ENCODE measurements at regions of chr6 and their contacts with region 1.

Region 1: DNA sequence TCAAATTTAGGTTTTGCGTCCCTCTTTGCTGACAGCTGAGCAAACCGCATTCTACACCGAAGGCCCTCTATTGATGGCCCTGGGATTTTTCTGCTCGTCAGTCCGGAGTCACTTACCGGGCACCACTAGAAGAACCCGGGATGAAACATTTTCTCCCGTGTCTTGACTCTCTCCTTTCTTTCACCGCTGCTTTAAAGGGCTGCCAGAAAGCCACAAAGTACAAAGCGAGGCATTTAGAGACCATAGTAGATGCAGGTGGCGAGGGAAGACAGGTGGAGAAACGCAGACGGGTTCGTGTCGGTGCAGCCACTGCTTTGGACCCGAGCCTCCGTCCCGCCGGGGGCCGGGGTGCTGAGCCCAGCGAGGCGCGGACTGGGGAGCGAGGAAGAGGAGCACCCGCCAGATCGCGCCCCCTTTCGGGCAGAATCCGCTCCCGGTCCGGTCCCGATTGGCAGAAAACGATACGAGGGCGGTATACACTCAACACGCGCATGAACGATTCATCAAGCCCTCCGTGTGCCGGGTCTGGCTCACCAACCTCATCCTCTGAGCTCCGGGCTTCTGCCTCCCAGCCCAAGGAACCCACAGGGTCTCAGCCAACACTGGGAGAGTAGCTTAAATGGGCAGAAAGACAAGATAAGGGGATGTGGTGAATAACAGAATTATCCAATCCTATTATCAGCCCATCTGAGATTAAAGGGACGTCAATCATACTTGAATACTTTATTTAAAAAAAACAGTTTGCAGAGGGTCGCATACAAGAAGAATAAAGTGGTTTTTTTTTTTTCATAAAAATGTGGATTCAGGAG is 84.9 kb downstream of the TRIM27 start:
- DNase-seq: peak; percentile 73
- CTCF ChIP-seq: peak; percentile 74

Region 2: DNA sequence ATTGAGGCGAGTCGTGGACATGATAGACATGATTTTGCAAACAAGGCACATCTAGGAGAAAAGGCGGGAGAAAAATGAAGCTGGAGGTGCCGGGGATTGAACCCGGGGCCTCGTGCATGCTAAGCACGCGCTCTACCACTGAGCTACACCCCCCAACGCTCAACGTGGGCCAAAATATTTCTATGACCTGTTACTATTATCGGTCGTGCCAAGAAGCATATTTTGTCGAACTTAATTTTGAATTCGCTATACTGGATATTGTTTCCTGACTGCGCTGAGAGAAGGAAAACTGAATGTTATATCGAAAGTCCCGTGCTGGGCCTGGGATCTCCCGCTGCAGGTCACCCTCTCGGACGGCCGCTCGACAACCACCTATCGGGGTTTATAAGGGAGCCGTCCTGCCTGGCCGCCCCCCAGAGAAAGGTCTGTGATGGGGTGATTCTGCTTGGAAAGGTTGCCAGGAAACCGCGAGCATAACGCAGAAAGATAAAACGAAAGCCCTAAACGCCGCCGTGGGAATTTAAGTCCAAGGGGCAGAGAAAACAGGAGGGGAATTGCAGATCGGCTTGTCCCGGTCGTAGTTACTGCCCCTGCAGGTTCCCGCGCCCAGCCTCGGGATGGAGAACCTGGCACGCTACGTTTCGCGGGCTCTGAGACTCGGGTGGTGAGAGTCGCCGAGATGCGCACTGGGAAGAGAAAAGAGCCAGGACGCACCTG is 24.9 kb after region 1 on chr6:
- CTCF ChIA-PET with region 1: interaction called, 29 read pairs
- POLR2A ChIA-PET with region 1: no interaction called
- DNase-seq: peak; percentile 60
- CTCF ChIP-seq: no peak

Region 3: GRCh38 chr6:28923318-28924102 is 84.7 kb after region 1 on chr6 and contains the start of gene TRIM27:
- CTCF ChIA-PET with region 1: interaction called, 10 read pairs
- POLR2A ChIA-PET with region 1: interaction called, 7 read pairs
- DNase-seq: peak; percentile 90
- CTCF ChIP-seq: no peak

Region 4: GRCh38 chr6:28969129-28969528 is 130.3 kb after region 1 on chr6:
- CTCF ChIA-PET with region 1: no interaction called
- POLR2A ChIA-PET with region 1: no interaction called
- DNase-seq: no peak
- CTCF ChIP-seq: no peak

Region 5: GRCh38 chr6:28981833-28982475 is 143.1 kb after region 1 on chr6:
- CTCF ChIA-PET with region 1: interaction called, 12 read pairs
- POLR2A ChIA-PET with region 1: no interaction called
- DNase-seq: peak; percentile 62
- CTCF ChIP-seq: no peak

Region 6: DNA sequence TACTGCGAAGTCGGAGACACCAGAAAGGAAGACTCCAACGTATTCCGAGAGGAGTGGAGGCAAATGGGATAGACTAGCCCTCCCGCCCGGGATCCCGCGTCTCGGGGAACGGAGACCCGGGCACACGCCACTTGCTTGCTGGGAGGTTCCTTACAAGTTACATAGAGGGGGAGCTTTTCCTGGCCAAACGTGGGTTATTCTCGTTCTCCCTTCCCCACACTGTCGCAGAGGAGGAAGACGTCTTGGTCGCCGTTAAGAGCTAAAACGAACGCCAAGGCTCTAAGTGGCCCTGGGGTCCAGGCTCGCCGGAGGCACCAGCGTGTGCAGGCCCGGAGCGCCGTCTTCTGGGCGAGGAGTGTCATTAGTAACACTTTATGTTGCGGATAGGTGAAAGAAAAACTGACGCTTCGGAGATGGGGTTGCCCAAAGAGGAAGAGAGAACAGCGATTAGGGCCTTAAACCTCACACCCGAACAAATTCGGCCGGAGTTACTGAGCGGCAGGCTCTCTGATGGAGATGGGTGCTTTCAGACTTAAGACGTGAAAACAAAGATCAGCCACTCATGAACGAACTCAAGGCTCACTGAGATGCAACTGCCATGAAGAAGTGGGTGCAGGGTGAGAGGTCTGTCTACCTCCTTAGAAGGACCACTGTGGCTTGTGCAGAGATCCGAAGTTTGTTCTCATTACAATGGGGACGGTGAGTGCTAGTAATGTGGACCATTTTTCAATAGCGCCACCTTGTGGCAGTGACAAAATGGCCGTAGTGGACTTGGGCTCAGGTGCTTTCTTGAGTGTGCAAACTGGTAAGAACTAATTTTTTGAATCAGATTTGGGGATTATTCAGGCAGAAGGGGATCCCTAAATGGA is 178.0 kb after region 1 on chr6:
- CTCF ChIA-PET with region 1: interaction called, 79 read pairs
- POLR2A ChIA-PET with region 1: no interaction called
- DNase-seq: peak; percentile 73
- CTCF ChIP-seq: peak; percentile 89